AG04449 (cell line): ENCODE measurements at regions of chr1 and their contacts with region 1.

Region 1: DNA sequence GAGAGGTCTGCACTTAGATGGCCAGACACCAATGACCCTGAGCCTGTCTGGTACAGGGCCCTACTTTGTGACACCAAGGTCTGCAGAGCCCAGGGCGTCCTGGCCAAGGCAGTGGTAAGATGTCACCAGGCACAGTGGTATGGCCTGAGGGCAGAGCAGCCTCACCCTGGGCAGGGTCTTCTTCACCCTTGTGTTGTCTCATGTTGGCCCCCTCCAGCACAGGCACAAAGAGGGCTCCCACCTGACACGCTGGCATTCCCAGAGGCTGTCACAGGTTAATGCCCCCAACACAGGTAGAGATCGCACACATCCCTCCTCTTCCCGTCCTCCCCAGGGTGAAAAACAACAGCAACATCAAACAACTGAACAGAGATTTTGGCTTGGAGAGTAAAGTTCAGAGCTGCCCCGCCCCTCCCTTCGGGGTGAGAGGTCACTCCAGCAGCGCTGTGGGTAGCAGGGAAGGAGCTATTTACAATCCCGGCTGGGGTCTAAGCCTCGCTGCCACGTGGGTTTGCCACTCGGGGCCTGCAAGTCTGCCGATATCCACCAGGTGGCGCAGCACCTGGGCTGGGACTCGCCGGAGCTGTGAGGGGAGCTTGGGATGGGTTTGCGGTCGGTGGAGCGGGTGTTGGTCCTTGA is 12.6 kb downstream of the EFNA3 start:
- DNase-seq: no peak
- H3K4me3 ChIP-seq: no peak overlapping the region
- CTCF ChIP-seq: peak; percentile 95

Region 2: DNA sequence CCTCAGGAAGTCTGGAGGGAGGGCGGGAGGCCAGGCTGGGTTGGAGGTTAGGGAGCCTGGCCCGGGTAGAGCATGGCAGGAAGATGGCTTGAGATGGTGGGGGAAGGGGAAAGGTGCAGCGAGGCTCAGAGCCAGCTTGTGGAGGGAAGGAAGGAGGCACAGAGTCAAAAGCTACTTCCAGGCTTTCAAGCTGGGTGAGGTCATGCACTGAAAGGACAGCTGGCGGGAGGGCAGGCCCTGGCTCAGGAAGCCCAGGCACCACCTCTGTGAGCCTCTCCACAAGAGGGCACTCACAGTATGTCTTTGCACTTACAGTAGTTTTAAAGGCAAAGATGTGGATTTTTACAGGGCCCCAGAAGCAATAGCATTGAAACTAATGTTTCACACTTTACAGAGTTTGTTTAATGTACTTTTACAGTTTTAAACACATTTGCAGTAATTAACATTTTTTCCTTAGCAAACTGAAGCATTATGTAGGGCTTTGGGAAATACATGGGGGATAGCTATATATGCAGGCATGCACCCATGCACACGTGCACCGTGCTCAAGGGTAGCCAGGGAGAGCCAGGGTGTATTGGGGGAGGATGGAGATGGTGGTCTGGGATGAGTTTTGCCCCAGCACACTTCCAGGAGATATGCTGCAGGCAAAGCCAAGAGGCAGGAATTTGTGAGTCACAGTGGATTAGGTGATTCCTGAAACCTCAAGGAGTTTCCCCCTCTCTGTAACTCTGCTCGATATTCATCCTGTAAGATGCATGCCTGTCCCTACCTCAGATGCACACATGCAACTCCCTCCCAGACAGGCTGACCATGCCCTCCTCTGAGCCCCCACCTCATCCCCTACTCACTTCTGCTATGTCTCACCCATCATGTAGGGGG is 46.1 kb before region 1 on chr1:
- CTCF ChIA-PET with region 1: interaction called, 67 read pairs
- POLR2A ChIA-PET with region 1: no interaction called
- DNase-seq: no peak
- H3K4me3 ChIP-seq: no peak overlapping the region
- CTCF ChIP-seq: peak; percentile 75

Region 3: GRCh38 chr1:155070721-155071569 is 20.2 kb before region 1 on chr1:
- CTCF ChIA-PET with region 1: interaction called, 212 read pairs
- POLR2A ChIA-PET with region 1: no interaction called
- DNase-seq: no peak
- H3K4me3 ChIP-seq: peak overlapping the region; percentile 44
- CTCF ChIP-seq: peak; percentile 46

Region 4: GRCh38 chr1:155105604-155106022 is 14.4 kb after region 1 on chr1:
- CTCF ChIA-PET with region 1: interaction called, 30 read pairs
- POLR2A ChIA-PET with region 1: no interaction called
- DNase-seq: no peak
- H3K4me3 ChIP-seq: no peak overlapping the region
- CTCF ChIP-seq: no peak

Region 5: DNA sequence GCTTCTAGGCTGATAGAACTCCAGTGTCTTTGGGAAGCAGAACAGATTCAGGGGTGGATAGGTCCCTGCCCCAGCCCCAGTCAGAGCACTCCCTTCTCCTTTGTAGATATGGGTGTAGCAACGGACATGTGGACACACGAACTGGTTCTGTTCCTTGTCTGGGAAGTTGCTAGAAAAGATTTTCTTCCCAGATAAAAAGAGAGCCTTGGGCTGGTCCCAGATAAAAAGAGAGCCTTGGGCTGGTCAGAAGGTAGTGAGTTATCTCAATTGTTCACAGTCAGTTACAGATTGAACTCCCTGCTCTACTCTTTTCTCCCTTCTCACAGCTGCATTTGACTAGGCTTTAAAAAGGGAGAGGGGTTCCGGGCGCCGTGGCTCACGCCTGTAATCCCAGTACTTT is 29.1 kb after region 1 on chr1:
- CTCF ChIA-PET with region 1: interaction called, 52 read pairs
- POLR2A ChIA-PET with region 1: no interaction called
- DNase-seq: no peak
- H3K4me3 ChIP-seq: no peak overlapping the region
- CTCF ChIP-seq: no peak

Region 6: GRCh38 chr1:155135415-155136028 is 44.3 kb after region 1 on chr1 and contains the start of gene SLC50A1:
- CTCF ChIA-PET with region 1: interaction called, 52 read pairs
- POLR2A ChIA-PET with region 1: no interaction called
- DNase-seq: peak; percentile 46
- H3K4me3 ChIP-seq: peak within 1 kb of the TSS; percentile 94
- CTCF ChIP-seq: no peak

Region 7: DNA sequence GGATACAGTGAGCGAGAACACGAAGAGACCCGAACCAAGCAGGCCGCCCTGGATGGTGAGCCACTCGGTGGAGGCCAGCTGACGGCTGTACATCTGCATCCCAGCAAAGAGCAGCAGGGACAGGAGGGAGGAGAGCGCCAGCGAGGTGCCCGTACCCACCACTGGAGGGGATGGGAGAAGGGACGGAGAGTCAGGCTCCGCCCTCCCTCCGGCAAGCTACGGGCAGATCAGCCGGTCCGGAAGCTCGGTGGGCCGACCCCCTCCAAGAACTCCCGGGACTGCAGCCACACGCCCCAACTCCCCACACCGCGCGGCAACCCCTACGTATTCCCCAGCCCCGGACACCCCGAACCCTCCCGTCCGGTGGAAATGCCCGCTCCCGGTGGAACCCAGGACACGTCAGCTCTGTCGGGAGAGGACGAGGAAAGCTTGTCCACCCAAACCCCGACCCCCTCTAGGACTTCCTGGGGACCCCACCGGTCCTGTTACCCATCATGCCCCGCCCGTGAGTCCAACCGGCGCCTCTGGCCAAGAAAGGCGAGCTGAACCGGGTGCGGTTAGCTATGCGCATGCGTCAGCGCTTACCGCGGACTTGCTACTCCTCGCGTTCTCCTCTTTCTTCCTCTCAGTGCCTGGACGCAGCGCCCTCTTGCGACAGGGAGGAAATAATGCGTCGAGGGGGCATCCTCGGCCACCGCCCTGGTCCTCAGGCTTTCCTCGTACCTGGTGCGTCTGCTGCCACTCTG is 81.7 kb after region 1 on chr1 and contains the start of gene KRTCAP2:
- CTCF ChIA-PET with region 1: interaction called, 457 read pairs
- POLR2A ChIA-PET with region 1: interaction called, 6 read pairs
- DNase-seq: peak; percentile 75
- H3K4me3 ChIP-seq: peak within 1 kb of the TSS; percentile 98
- CTCF ChIP-seq: peak; percentile 96

Region 8: DNA sequence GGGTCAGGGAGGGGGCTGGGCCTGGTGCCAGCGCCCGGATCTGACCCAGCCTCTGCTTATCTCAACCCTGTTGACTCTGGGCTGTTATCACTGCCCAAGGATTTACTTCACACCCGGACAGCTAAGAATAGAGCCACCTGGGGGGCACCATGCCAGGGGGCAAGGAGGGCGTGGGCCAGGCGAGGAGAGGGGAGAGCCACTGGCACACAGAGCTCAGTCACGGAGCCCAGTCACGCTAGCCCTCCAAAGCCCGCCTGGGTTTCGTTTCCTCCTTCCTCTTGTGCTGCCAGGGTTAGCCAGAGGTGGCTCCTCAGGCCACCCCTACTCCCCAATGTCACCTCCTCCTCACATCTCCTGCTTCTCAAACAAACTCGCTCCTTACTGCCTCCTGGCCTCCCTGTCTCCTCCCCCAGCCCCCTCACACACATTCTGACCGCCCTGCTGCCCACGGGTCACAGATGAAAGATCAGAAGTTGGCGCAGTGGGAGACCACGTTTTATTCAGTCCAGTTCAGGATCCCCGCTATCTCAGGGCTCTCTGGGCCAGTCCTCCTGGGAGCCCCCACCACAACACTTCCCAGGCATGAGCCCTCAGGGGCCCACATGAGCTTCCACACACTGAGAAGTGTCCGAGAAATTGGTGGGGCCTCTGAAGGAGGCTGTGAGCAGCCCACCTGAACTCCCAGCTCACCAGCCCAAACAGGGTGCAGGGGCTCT is 94.3 kb after region 1 on chr1:
- CTCF ChIA-PET with region 1: no interaction called
- POLR2A ChIA-PET with region 1: no interaction called
- DNase-seq: no peak
- H3K4me3 ChIP-seq: no peak overlapping the region
- CTCF ChIP-seq: no peak